A673 (cell line): ENCODE measurements at regions of chr5 and their contacts with region 1.

Region 1: DNA sequence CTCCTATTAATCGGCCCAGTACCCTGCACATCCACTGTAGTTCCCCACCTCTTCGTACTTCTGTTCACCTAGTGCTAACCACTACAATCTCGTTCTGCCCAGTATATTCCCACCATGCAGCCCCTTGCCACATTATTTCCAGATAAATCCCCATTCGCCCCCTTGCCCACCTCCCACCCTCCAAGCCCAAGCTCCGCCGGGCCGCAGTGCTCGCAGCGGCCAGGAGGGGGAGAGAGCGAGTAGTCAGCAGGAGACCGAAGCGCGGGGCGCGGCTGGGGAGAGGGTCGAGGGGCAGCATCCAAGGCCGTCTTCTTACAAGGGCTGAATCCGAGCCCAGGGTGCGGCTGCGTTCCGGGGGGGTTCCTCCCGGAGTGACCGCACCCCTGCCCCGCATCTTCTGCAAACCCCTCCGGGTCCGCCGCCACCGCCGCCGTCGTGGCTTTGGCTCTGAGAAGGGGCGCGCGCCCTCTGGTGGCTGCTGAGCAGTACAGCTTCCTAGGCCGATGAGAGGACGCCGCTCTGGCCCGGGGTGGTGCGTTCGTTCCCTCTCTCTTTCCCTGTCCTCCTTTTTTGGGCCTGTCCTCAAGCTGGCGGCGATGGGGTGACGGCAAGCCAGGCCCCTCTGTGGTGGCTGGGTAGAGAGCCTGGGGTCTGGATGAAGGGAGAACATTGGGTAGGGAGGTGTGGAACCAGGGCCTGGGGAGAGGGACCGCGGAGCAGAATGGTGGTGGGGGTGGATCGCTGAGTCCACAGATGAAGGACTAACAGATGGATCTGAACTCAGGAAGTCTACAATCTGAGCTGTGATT is 30.0 kb upstream of the PSD2 start:
- DNase-seq: peak; percentile 81
- H3K4me3 ChIP-seq: peak overlapping the region; percentile 58
- H3K27ac ChIP-seq: no peak overlapping the region
- H3K4me1 ChIP-seq: no peaks in the 10 kb centered on the region
- H3K27me3 ChIP-seq: no peaks in the 10 kb centered on the region
- CTCF ChIP-seq: peak; percentile 96

Region 2: GRCh38 chr5:139422307-139422893 is 343.2 kb before region 1 on chr5:
- CTCF ChIA-PET with region 1: interaction called, 3 read pairs
- POLR2A ChIA-PET with region 1: no interaction called
- intact Hi-C with region 1: loop called (anchors 1 kb)
- DNase-seq: peak; percentile 77
- H3K4me3 ChIP-seq: no peak overlapping the region
- H3K27ac ChIP-seq: no peak overlapping the region
- H3K4me1 ChIP-seq: peaks cover 7% of the 10 kb centered on the region
- H3K27me3 ChIP-seq: no peaks in the 10 kb centered on the region
- CTCF ChIP-seq: peak; percentile 94